CD4-positive, alpha-beta memory T cell (primary cell): ENCODE measurements at regions of chr14 and their contacts with region 1.

Region 1: GRCh38 chr14:103910262-103910935 is 17.9 kb upstream of the TDRD9 start:
- DNase-seq: peak; percentile 61 to 70 (median 65)
- H3K4me3 ChIP-seq: peak overlapping the region in 1 of 2 donors; percentile 15
- H3K4me3 Mint-ChIP-seq: peak overlapping the region; percentile 47 to 80 (median 71)
- H3K27ac ChIP-seq: peak overlapping the region; percentile 4
- H3K27ac Mint-ChIP-seq: peak overlapping the region in 6 of 7 donors; percentile 43 to 79 (median 72)
- H3K4me1 ChIP-seq: peaks cover 8% of the 10 kb centered on the region
- H3K4me1 Mint-ChIP-seq: peaks cover 6 to 20% (median 10%) of the 10 kb centered on the region in 4 donors
- H3K27me3 ChIP-seq: no peaks in the 10 kb centered on the region
- H3K27me3 Mint-ChIP-seq: no peaks in the 10 kb centered on the region

Region 2: DNA sequence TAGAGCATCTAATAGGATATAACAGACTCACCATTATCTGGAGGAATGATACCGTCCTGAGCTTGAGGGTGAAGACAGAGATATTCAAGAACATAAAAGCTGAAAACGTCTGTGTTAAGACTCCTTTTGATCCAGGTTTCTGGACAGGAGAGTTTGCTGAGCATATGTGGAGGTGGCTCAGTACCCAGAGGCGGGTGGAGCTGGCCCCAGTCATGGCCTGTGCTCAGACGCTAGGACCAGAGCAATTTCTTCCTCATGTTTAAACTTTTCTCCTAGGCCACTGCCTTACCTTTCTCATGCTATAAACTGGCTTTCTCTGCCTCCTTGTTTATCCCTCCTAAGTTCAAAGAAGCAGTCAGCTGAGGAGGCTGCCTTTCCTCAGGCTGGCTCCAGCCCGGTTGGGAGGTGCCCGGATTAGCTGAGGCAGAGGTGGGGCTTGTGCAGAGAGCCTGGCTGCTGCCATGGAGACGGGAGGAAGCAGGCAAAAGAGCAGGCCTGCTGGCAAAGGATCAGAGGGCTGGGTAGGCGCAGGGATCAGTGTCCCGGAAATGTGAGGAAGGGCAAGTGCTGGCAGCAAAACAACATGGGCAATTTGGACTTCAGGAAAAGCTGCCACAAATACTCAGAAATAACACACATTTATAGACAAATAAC is 333.9 kb before region 1 on chr14:
- CTCF ChIA-PET with region 1: no interaction called
- POLR2A ChIA-PET with region 1: no interaction called
- intact Hi-C with region 1: loop called (anchors 2 kb)
- DNase-seq: no peak
- H3K4me3 ChIP-seq: no peak overlapping the region
- H3K4me3 Mint-ChIP-seq: no peak overlapping the region
- H3K27ac ChIP-seq: no peak overlapping the region
- H3K27ac Mint-ChIP-seq: no peak overlapping the region
- H3K4me1 ChIP-seq: no peaks in the 10 kb centered on the region
- H3K4me1 Mint-ChIP-seq: peaks cover 0 to 2% (median 0%) of the 10 kb centered on the region in 4 donors
- H3K27me3 ChIP-seq: no peaks in the 10 kb centered on the region
- H3K27me3 Mint-ChIP-seq: no peaks in the 10 kb centered on the region

Region 3: DNA sequence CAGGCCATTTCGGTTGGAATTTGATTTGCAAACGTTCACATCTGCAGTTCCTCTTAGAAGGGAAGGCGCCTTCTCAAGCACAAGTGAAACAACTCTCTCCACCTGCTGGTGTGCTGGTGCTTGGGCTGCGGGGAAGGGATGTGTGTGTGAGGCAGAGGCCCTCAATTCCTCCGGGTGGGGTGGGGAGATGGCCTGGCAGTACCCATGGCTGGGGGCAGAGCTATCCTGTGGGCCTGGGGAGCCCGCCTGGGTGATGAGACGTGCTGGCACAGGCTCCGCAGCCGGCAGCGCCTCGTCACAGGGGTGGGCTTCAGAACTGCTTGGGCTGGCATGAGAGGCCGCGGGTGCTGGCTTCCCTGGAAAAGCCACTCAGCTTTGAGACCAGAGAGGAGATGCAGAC is 11.1 kb before region 1 on chr14:
- CTCF ChIA-PET with region 1: interaction called, 52 read pairs
- POLR2A ChIA-PET with region 1: interaction called, 4 read pairs
- intact Hi-C with region 1: no loop called
- DNase-seq: no peak
- H3K4me3 ChIP-seq: no peak overlapping the region
- H3K4me3 Mint-ChIP-seq: no peak overlapping the region
- H3K27ac ChIP-seq: no peak overlapping the region
- H3K27ac Mint-ChIP-seq: no peak overlapping the region
- H3K4me1 ChIP-seq: no peaks in the 10 kb centered on the region
- H3K4me1 Mint-ChIP-seq: peaks cover 0 to 7% (median 3%) of the 10 kb centered on the region in 4 donors
- H3K27me3 ChIP-seq: no peaks in the 10 kb centered on the region
- H3K27me3 Mint-ChIP-seq: peaks cover 0 to 3% of the 10 kb centered on the region in 2 donors